H1 (cell line): ENCODE measurements at regions of chr4 and their contacts with region 1.

Region 1: GRCh38 chr4:64539234-64539849 is 130.1 kb upstream of the TECRL start:
- DNase-seq: no peak
- H3K4me3 ChIP-seq: no peak overlapping the region
- H3K27ac ChIP-seq: no peak overlapping the region
- H3K4me1 ChIP-seq: no peaks in the 10 kb centered on the region
- H3K27me3 ChIP-seq: peaks cover 0 to 2% (median 0%) of the 10 kb centered on the region in 4 experiments; a peak in 1 of 7 replicates
- CTCF ChIP-seq: peak in 2 of 3 experiments; percentile 69 to 73; a peak in 3 of 4 replicates
- EP300 ChIP-seq: no peak
- POLR2A ChIP-seq: no peak
- RAD21 ChIP-seq: peak; percentile 94

Region 2: GRCh38 chr4:64158648-64159326 is 380.6 kb before region 1 on chr4:
- CTCF ChIA-PET with region 1: interaction called, 18 read pairs
- POLR2A ChIA-PET with region 1: no interaction called
- DNase-seq: peak in 1 of 2 experiments; percentile 58
- H3K4me3 ChIP-seq: no peak overlapping the region
- H3K27ac ChIP-seq: no peak overlapping the region
- H3K4me1 ChIP-seq: no peaks in the 10 kb centered on the region
- H3K27me3 ChIP-seq: no peaks in the 10 kb centered on the region
- CTCF ChIP-seq: peak in 2 of 3 experiments; percentile 50 to 85; a peak in 2 of 4 replicates
- EP300 ChIP-seq: no peak
- POLR2A ChIP-seq: no peak
- RAD21 ChIP-seq: peak; percentile 79 to 81

Region 3: DNA sequence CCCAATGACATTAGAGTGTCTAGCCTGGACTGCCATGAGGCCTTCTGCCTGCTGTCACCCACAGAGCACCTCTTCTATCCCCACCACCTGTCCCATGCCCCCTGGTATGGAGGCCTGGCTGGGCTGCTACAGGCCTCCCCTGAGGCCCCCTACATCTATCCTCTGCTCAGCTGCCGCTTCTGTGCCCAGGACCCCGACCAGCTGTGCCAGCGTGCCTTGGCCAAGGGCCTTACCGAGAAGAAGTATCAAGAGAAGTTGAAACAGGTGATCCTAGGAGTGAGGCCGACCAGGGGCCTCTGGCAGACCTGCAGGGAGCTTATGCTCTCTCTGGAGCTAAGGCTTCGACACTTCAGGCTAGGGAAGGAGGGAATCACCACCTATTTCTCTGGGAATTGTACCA is 108.4 kb before region 1 on chr4:
- CTCF ChIA-PET with region 1: no interaction called
- POLR2A ChIA-PET with region 1: no interaction called
- DNase-seq: no peak
- H3K4me3 ChIP-seq: no peak overlapping the region
- H3K27ac ChIP-seq: no peak overlapping the region
- H3K4me1 ChIP-seq: no peaks in the 10 kb centered on the region
- H3K27me3 ChIP-seq: no peaks in the 10 kb centered on the region
- CTCF ChIP-seq: no peak
- EP300 ChIP-seq: no peak
- POLR2A ChIP-seq: no peak
- RAD21 ChIP-seq: no peak